GM10248 (cell line): ENCODE measurements at regions of chr4 and their contacts with region 1.

Region 1: DNA sequence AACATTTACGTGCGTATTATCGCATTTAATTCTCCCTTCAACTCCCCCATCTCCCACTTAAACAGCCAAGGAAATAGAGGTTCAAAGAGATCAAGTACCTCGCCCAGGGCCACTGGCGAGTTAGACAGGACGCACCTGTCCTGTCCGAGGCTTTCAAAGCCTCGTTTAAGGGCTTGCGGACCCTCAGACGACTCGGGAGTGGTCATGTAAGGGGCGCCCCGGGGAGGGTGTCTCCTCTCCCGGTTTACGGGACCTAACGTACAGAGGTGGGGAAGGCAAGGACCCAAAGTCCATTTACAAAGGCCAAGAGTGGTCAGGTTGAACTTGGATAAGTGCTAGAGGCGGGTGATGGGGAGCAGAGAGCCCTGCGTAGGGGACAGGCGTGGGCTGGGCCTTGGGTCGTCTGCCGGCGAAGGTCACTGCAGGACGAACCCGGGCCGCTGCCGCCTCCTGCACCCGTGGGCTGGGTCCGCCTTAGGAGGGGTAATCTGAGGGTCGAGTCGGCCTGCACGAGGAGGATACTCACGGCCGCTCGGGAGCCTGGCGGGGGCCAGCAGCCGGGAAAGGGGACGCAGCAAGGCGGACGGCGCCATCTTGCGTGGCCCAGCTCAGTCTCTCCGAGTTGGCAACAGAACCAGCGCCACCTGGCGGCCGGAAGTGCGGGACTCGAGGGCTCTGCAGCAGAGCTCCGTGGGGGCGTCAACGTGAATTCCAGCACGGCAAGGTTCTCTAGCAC is 5.9 kb upstream of the NAA15 start:
- DNase-seq: peak; percentile 89
- CTCF ChIP-seq: peak; percentile 98

Region 2: GRCh38 chr4:139099366-139099982 is 195.9 kb before region 1 on chr4:
- CTCF ChIA-PET with region 1: interaction called, 17 read pairs
- POLR2A ChIA-PET with region 1: no interaction called
- DNase-seq: peak; percentile 75
- CTCF ChIP-seq: peak; percentile 77

Region 3: GRCh38 chr4:139229534-139230039 is 65.8 kb before region 1 on chr4:
- CTCF ChIA-PET with region 1: interaction called, 16 read pairs
- POLR2A ChIA-PET with region 1: no interaction called
- DNase-seq: peak; percentile 52
- CTCF ChIP-seq: peak; percentile 65

Region 4: GRCh38 chr4:139279760-139280620 is 15.4 kb before region 1 on chr4 and contains the start of gene MGARP:
- CTCF ChIA-PET with region 1: interaction called, 39 read pairs
- POLR2A ChIA-PET with region 1: no interaction called
- DNase-seq: peak; percentile 28
- CTCF ChIP-seq: no peak

Region 5: GRCh38 chr4:139331185-139331584 is 35.8 kb after region 1 on chr4:
- CTCF ChIA-PET with region 1: interaction called, 18 read pairs
- POLR2A ChIA-PET with region 1: no interaction called
- DNase-seq: no peak
- CTCF ChIP-seq: no peak

Region 6: GRCh38 chr4:139416073-139416673 is 120.8 kb after region 1 on chr4:
- CTCF ChIA-PET with region 1: no interaction called
- POLR2A ChIA-PET with region 1: no interaction called
- DNase-seq: peak; percentile 33
- CTCF ChIP-seq: peak; percentile 61

Region 7: DNA sequence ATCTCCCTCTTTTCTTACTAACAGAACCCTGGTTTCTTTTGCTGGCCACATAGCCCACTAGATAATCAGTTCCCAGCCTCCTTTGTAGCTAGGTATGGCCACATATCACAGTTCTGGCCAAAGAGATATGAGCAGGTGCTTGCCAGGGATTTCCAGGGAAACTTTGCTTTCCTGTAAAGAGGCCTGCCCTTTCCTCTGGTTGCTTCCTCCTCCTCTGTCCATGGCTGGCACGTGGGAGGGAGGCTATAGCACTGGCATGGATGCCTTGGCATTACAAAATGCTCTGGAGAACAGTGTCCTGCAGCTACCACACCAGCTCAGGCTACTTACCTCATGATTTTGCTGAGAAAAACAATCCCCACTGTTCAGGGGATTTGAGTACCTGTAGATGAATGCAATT is 186.1 kb after region 1 on chr4:
- CTCF ChIA-PET with region 1: no interaction called
- POLR2A ChIA-PET with region 1: no interaction called
- DNase-seq: no peak
- CTCF ChIP-seq: no peak